ENCODE measurements at regions of chr2 and their contacts with region 1.

Region 1: GRCh38 chr2:177552422-177553175 is 160.0 kb downstream of the AGPS start:
- DNase-seq: peak; percentile 88
- H3K4me3 Mint-ChIP-seq: peak overlapping the region; percentile 95
- H3K27ac Mint-ChIP-seq: peak overlapping the region; percentile 100
- H3K4me1 Mint-ChIP-seq: peaks cover 16% of the 10 kb centered on the region
- H3K27me3 Mint-ChIP-seq: no peaks in the 10 kb centered on the region

Region 2: GRCh38 chr2:176826984-176827668 is 725.5 kb before region 1 on chr2:
- intact Hi-C with region 1: loop called (anchors 2 kb)
- DNase-seq: no peak
- H3K4me3 Mint-ChIP-seq: peak overlapping the region; percentile 11
- H3K27ac Mint-ChIP-seq: peak overlapping the region; percentile 67
- H3K4me1 Mint-ChIP-seq: peaks cover 25% of the 10 kb centered on the region
- H3K27me3 Mint-ChIP-seq: peaks cover 6% of the 10 kb centered on the region

Region 3: DNA sequence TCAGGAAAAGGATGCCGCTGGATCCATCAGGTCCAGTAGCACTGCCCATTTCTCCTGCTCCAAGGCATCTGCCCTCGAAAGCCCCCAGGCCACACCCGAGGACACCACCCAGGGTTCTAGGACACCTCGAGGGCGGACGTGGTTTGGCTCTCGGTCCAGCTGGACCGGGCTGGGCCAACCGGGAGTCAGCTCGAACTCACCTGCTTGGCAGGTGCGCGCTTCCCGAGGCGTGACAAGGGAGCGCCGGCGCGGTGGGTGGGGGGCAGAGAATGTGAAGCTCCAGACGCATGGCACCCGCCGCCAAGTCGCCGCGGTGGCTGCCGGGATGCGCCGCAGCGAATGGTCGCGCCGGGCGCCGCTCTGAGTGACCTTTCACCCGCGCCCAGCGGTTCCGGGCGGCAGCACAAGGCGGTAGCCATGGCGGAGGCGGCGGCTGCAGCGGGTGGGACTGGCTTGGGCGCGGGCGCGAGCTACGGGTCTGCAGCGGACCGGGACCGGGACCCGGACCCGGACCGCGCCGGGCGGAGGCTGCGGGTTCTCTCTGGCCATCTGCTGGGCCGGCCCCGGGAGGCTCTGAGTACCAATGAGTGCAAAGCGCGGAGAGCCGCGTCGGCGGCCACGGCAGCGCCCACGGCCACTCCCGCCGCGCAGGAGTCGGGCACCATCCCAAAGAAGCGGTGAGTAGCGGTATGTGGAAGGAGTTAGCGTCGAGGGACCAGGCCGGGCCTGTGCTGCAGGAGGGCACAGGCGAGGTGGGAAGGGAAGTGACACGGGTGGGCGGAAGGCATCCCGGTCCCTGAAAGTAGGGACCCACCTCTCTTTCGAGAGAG is 160.0 kb before region 1 on chr2 and contains the start of gene AGPS:
- intact Hi-C with region 1: loop called (anchors 2 kb)
- DNase-seq: peak; percentile 80
- H3K4me3 Mint-ChIP-seq: peak within 1 kb of the TSS; percentile 90
- H3K27ac Mint-ChIP-seq: peak within 1 kb of the TSS; percentile 92
- H3K4me1 Mint-ChIP-seq: peaks cover 58% of the 10 kb centered on the region
- H3K27me3 Mint-ChIP-seq: no peaks in the 10 kb centered on the region
- total RNA-seq, gene AGPS: 70.1 and 71.8 TPM in 2 replicates

Region 4: DNA sequence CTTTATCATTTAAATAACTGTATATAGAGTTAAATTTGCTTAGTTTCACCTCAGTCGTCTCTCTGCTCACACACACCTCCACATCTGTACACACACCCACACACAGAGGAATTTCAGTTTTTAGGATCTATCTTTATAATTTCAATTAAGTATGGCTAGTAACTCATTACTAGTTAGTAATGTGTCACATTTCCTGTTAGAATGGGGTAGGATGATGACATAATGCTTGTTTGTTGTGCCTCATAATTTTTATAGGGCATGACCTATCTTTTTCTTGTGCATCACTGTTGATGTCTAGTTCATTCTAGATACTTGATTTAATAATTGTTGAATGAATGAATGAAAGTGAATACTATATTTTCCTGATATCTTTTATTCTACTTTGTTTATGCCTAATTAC is 51.4 kb before region 1 on chr2:
- intact Hi-C with region 1: loop called (anchors 5 kb)
- DNase-seq: no peak
- H3K4me3 Mint-ChIP-seq: no peak overlapping the region
- H3K27ac Mint-ChIP-seq: no peak overlapping the region
- H3K4me1 Mint-ChIP-seq: peaks cover 7% of the 10 kb centered on the region
- H3K27me3 Mint-ChIP-seq: no peaks in the 10 kb centered on the region

Region 5: DNA sequence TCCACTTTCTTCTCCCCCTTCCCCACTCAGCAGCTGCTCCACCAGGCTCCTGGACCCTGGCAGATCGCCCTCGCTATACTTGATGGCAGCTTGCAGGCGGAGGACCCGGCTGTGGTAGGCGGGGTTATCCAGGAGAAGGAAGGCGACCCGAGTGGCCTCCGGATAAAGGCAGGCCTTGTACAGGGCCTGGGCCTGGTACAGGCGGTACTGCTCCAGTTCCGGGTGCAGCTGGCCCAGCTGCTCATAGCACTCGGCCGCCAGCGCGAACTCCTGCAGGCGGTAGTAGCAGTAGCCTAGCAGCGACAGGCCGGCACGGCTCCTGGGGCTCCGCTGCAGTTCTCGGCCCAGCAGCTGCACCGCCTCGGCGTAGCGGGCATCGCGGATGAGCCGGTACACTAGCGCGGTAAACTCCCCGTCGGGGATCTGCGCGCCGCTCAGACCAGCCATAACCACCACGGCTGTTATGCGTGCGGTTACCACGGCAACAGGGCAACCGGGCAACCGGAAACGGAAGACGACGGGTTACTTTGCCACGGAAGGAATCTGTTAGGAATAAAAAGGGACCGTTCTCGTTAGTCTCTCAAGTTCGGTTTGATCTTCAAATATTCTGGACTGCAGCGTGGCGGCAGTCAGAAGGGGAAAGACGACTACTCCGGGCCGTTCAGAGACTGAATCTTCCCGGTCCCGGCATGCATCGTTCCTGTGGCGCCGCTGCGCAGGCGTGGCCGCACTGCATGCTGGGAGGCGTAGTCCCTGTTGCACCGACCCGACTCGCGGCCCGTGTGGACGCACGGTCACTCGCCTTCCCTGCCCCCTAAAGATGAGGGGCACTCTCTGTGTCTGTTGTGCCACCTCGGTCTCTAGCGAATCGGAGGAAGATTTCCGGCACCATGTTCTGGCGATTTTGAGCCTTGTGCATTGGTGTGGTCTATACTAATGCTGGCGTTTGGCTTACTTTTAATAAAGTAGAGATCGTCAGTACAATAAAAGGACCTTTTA is 66.0 kb after region 1 on chr2:
- intact Hi-C with region 1: loop called (anchors 1 kb)
- DNase-seq: peak; percentile 91
- H3K4me3 Mint-ChIP-seq: peak overlapping the region; percentile 94
- H3K27ac Mint-ChIP-seq: peak overlapping the region; percentile 99
- H3K4me1 Mint-ChIP-seq: peaks cover 13% of the 10 kb centered on the region
- H3K27me3 Mint-ChIP-seq: peaks cover 4% of the 10 kb centered on the region

Region 6: DNA sequence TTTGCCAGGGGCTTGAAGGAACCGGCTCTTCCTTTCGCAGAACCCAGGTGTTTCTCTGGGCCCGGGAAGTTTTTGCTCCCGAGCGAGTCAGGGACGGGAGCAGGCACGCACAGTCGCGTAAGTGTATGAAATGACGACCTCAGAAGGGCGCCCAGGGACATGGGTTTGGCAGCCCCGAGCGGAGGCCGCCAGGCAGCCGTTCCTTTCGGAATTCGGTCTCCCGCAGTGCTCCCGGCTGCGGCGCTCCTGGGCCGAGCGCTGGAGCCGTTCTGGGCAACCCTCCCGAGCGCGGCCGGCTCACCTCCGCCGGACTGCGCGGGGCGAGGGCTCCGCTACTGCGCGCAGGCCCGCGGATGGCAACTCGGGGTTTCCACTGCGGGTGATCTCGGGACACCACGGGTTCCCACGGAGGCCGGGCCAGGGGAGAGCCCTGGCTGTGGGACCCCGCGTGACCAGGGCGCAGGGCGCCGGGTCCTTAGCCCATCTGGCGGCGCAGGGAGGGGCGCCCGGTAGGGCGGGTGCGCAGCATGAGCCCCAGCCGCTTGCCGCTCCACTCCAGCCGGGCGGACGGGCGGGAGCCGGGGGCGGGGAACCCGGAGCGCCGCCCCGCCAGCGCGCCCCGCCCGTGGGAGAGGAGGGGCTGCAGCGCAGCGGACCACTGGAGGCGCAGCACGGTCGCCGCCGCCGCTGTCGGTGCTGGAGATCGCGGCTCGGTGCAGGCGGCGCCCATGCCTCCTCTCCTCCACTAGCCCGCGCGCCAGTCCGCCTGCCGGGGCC is 641.4 kb after region 1 on chr2 and contains the start of gene OSBPL6:
- intact Hi-C with region 1: loop called (anchors 5 kb)
- DNase-seq: peak; percentile 75
- H3K4me3 Mint-ChIP-seq: peak within 1 kb of the TSS; percentile 80
- H3K27ac Mint-ChIP-seq: no peak within 1 kb of the TSS
- H3K4me1 Mint-ChIP-seq: peaks cover 11% of the 10 kb centered on the region
- H3K27me3 Mint-ChIP-seq: peaks cover 57% of the 10 kb centered on the region
- total RNA-seq, gene OSBPL6: 1.5 and 1.9 TPM in 2 replicates